CD4-positive, alpha-beta memory T cell (primary cell): ENCODE measurements at regions of chr6 and their contacts with region 1.

Region 1: GRCh38 chr6:28355743-28356665 is 6.3 kb downstream of the ZKSCAN3 start:
- DNase-seq: peak; percentile 59 to 68 (median 66)
- H3K4me3 ChIP-seq: peak overlapping the region; percentile 43 to 70
- H3K4me3 Mint-ChIP-seq: peak overlapping the region; percentile 86 to 95 (median 91)
- H3K27ac ChIP-seq: peak overlapping the region; percentile 50
- H3K27ac Mint-ChIP-seq: peak overlapping the region in 6 of 7 donors; percentile 40 to 91 (median 88)
- H3K4me1 ChIP-seq: peaks cover 21% of the 10 kb centered on the region
- H3K4me1 Mint-ChIP-seq: peaks cover 17 to 29% (median 25%) of the 10 kb centered on the region in 4 donors
- H3K27me3 ChIP-seq: no peaks in the 10 kb centered on the region
- H3K27me3 Mint-ChIP-seq: no peaks in the 10 kb centered on the region

Region 2: DNA sequence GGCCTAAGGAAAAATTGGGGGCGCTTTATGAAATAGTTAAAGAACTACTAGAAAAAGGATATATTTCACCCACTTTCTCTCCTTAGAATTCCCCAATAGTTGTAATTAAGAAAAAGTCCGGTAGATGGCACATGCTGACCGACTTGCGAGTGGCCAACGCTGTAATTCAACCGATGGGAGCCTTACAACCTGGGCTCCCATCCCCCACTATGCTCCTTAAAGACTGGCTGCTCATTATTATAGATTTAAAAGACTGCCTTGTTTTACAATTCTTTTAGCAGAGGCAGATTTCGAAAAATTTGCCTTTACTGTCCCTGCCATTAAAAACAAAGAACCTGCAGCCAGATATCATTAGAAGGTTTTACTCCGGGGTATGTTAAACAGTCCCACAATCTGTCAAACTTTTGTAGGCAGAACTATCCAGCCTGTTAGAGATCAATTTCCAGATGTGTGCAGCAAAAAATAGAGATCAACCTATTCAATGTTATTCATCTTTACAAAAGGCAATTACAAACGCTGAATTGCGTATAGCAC is 1167.1 kb before region 1 on chr6:
- CTCF ChIA-PET with region 1: interaction called, 4 read pairs
- POLR2A ChIA-PET with region 1: no interaction called
- intact Hi-C with region 1: loop called (anchors 1 kb)
- DNase-seq: peak; percentile 55 to 69 (median 67)
- H3K4me3 ChIP-seq: peak overlapping the region; percentile 58 to 73
- H3K4me3 Mint-ChIP-seq: peak overlapping the region; percentile 79 to 96 (median 93)
- H3K27ac ChIP-seq: peak overlapping the region; percentile 44
- H3K27ac Mint-ChIP-seq: peak overlapping the region; percentile 49 to 86 (median 73)
- H3K4me1 ChIP-seq: peaks cover 9% of the 10 kb centered on the region
- H3K4me1 Mint-ChIP-seq: peaks cover 2 to 20% (median 15%) of the 10 kb centered on the region in 4 donors
- H3K27me3 ChIP-seq: no peaks in the 10 kb centered on the region
- H3K27me3 Mint-ChIP-seq: no peaks in the 10 kb centered on the region

Region 3: GRCh38 chr6:27902335-27903314 is 453.4 kb before region 1 on chr6:
- CTCF ChIA-PET with region 1: interaction called, 3 read pairs
- POLR2A ChIA-PET with region 1: no interaction called
- intact Hi-C with region 1: loop called (anchors 2 kb)
- DNase-seq: peak; percentile 87 to 91 (median 90)
- H3K4me3 ChIP-seq: peak overlapping the region; percentile 53
- H3K4me3 Mint-ChIP-seq: peak overlapping the region; percentile 87 to 98 (median 90)
- H3K27ac ChIP-seq: peak overlapping the region; percentile 51
- H3K27ac Mint-ChIP-seq: peak overlapping the region; percentile 94 to 100 (median 97)
- H3K4me1 ChIP-seq: peaks cover 5% of the 10 kb centered on the region
- H3K4me1 Mint-ChIP-seq: peaks cover 0 to 12% (median 4%) of the 10 kb centered on the region in 4 donors
- H3K27me3 ChIP-seq: peaks cover 4% of the 10 kb centered on the region
- H3K27me3 Mint-ChIP-seq: peaks cover 8 to 10% of the 10 kb centered on the region in 2 donors

Region 4: DNA sequence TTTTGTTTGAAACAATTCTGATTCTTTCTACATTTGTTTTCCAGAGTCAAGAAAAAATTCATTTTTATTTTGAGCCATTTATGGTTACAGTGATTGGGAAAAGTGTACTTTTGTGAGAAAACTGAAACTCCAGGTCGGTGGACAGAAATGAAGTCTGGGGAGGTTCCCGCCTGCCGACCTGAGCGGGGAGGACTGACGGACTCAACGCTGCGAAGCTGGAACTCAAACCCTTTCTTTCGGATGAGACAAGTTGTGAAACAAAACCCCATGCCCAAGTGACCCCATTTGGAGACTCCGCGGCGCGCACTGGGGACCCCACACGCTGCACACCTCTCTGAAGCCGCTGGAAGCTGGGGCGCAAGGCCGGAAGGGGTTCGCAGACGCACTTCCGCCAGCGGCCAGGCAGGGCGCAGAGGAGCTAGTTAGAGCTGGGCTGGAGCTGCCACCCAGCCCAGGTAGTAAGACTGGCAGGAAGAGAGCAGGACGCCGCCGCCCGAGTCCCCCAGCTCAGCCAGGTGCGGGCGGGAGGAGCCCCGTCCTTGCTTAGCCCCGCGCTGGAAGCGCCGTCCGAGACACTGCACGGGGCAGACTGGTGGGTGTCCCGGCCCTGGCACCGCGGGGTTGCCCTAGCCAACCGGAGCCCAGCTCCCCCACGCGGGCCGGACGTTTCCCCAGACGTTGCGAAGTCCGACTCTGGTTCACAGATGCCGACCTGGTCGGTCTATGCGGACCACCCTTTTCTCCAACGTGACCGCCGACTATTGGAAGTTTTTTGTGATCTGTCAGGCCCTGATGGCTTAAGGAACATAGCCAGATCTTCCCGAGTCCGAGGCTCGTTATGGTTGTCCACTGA is 251.4 kb before region 1 on chr6:
- CTCF ChIA-PET with region 1: interaction called, 17 read pairs
- POLR2A ChIA-PET with region 1: interaction called, 7 read pairs
- intact Hi-C with region 1: no loop called
- DNase-seq: peak; percentile 79 to 83 (median 82)
- H3K4me3 ChIP-seq: peak overlapping the region; percentile 59 to 67
- H3K4me3 Mint-ChIP-seq: peak overlapping the region; percentile 85 to 96 (median 92)
- H3K27ac ChIP-seq: peak overlapping the region; percentile 72
- H3K27ac Mint-ChIP-seq: peak overlapping the region; percentile 80 to 97 (median 93)
- H3K4me1 ChIP-seq: peaks cover 13% of the 10 kb centered on the region
- H3K4me1 Mint-ChIP-seq: peaks cover 3 to 17% (median 11%) of the 10 kb centered on the region in 4 donors
- H3K27me3 ChIP-seq: no peaks in the 10 kb centered on the region
- H3K27me3 Mint-ChIP-seq: peaks cover 3 to 11% of the 10 kb centered on the region in 2 donors

Region 5: DNA sequence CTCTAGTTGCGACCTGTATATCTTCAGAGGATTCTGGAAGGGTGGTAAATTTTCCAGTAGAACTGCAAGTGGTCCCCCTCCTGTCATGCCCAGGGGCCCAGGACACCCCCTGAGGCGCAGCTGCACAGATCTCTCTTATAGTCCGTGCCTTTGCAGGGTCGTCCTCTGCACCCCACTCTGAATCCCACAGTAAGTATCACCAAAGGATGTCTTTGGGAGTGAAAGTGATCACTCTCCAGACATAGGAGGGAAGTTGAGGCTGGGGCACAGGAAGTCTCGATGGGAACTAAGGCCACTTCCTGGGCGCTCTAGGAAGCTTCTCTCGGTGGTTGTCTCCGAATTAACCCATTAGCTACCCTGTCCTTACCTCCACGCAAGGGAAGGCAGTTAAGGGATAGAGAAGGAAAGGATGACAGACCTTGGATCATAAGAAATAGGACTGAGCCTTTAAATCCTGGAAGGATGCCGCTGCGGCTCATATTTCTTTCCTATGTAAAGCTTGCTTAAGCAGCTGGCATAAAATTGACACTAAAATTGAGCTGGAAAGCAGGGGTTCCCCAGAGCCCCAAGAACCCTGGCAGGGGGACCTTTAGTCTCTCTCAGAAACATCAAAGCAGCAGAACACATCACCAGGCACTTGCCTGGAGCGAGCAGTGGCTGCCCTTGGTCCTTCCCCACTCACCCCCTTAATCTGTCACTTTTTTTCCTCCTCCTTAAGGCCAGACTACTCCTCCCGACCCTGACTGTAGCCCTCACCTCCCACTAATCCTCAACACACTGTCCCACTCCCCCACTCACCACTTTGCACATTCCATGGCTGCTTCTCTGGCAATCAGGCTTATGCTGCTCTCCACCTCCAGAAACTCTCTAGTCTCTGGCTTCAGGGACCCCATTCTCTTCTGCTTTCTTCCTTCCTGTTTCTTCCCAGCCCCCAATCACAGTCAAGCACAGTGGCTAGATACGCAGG is 103.7 kb before region 1 on chr6 and contains the start of gene ZKSCAN4:
- CTCF ChIA-PET with region 1: interaction called, 15 read pairs
- POLR2A ChIA-PET with region 1: interaction called, 5 read pairs
- intact Hi-C with region 1: no loop called
- DNase-seq: peak; percentile 79 to 82 (median 80)
- H3K4me3 ChIP-seq: peak within 1 kb of the TSS; percentile 98 to 99
- H3K4me3 Mint-ChIP-seq: peak within 1 kb of the TSS; percentile 94 to 99 (median 97)
- H3K27ac ChIP-seq: peak within 1 kb of the TSS; percentile 52
- H3K27ac Mint-ChIP-seq: peak within 1 kb of the TSS; percentile 75 to 95 (median 89)
- H3K4me1 ChIP-seq: peaks cover 22% of the 10 kb centered on the region
- H3K4me1 Mint-ChIP-seq: peaks cover 22 to 38% (median 31%) of the 10 kb centered on the region in 4 donors
- H3K27me3 ChIP-seq: no peaks in the 10 kb centered on the region
- H3K27me3 Mint-ChIP-seq: no peaks in the 10 kb centered on the region
- total RNA-seq, gene ZKSCAN4: 9.9 to 11.1 TPM

Region 6: GRCh38 chr6:28281288-28282064 is 74.5 kb before region 1 on chr6 and contains the start of gene PGBD1:
- CTCF ChIA-PET with region 1: interaction called, 10 read pairs
- POLR2A ChIA-PET with region 1: no interaction called
- intact Hi-C with region 1: no loop called
- DNase-seq: peak in 4 of 5 donors; percentile 18 to 40 (median 27)
- H3K4me3 ChIP-seq: peak within 1 kb of the TSS in 1 of 2 donors; percentile 37
- H3K4me3 Mint-ChIP-seq: peak within 1 kb of the TSS; percentile 63 to 79 (median 75)
- H3K27ac ChIP-seq: no peak within 1 kb of the TSS
- H3K27ac Mint-ChIP-seq: peak within 1 kb of the TSS in 1 of 7 donors; percentile 28
- H3K4me1 ChIP-seq: peaks cover 6% of the 10 kb centered on the region
- H3K4me1 Mint-ChIP-seq: peaks cover 4 to 8% (median 7%) of the 10 kb centered on the region in 4 donors
- H3K27me3 ChIP-seq: no peaks in the 10 kb centered on the region
- H3K27me3 Mint-ChIP-seq: peaks cover 16 to 31% of the 10 kb centered on the region in 2 donors
- total RNA-seq, gene PGBD1: 1.1 to 1.4 TPM

Region 7: DNA sequence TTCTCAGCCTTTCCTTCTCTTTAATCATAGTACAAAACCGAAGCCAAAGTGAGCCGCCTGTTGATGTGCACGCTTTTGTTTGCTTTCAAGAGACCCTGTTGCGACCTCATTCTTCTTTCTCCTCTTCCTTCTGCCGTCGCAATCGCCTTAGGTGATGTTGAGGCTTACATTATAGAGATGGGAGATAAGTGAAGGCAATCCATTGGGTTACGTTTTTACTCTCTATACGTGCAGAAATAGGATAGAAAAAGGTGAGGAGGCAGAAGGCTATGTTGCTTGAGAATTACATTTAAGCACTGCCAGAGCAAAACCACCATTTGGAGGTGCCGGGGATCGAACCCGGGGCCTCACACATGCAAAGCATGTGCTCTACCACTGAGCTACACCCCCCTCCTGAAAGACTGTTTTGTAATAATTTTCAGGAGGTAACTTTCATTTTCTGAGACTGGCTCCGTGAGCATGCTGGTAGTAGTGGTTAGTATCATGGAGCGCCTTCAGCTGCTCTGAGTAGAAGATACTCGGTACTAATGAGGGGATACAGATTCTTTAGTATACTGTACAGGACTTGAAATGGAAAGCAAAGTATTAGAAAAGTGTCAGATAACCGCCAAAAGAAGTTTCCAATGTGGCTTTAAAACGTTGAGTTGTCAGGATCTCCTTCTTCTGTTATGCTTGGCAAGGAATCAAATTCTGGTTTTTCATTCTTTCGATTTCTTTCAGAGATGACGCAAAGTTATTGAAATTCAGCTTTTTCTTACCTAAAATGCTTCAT is 402.2 kb after region 1 on chr6:
- CTCF ChIA-PET with region 1: no interaction called
- POLR2A ChIA-PET with region 1: no interaction called
- intact Hi-C with region 1: no loop called
- DNase-seq: no peak
- H3K4me3 ChIP-seq: no peak overlapping the region
- H3K4me3 Mint-ChIP-seq: no peak overlapping the region
- H3K27ac ChIP-seq: no peak overlapping the region
- H3K27ac Mint-ChIP-seq: no peak overlapping the region
- H3K4me1 ChIP-seq: no peaks in the 10 kb centered on the region
- H3K4me1 Mint-ChIP-seq: peaks cover 0 to 2% (median 0%) of the 10 kb centered on the region in 4 donors
- H3K27me3 ChIP-seq: peaks cover 4% of the 10 kb centered on the region
- H3K27me3 Mint-ChIP-seq: peaks cover 39 to 43% of the 10 kb centered on the region in 2 donors